ENCODE measurements at regions of chr16 and their contacts with region 1.

Region 1: DNA sequence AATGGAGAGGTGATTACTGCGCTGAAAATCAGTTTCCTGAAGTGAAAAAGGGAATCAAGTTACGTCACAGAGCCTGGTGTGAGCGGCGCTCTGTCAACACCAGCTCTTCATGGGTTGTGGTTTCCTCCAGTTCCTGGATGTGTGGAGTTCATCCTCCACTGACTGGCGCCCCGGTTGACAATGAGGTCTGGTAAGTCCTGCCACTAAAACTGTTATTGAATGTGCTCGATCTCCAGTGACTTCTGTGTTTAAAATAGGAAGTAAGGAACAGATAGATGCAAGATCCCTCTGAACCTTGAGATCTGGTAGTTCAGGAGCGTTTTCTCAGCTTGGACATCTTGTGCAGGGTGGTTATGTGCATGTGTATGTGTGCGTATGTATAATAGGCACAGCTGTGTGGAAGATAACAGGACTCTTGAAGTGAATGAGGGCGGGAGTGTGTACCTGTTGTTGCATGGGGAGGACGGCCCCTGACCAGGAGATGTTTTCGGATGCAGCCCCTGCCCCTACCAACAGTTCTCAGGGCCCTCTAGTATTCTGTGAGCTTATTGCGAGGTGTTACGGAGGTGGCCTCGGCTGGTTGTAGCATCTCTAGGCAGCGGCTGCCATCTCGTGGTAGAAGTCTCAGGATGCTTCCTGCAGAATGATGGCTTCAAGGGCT is 22.0 kb upstream of the GOT2 start:
- DNase-seq: peak; percentile 44 to 82 (median 76)
- ATAC-seq: peak; percentile 94
- H3K4me3 ChIP-seq: peak overlapping the region; percentile 28
- H3K4me3 Mint-ChIP-seq: peak overlapping the region; percentile 56 to 79 (median 70)
- H3K27ac ChIP-seq: peak overlapping the region; percentile 19
- H3K27ac Mint-ChIP-seq: peak overlapping the region; percentile 32 to 94 (median 87)
- H3K4me1 ChIP-seq: peaks cover 0 to 7% of the 10 kb centered on the region in 2 donors
- H3K4me1 Mint-ChIP-seq: peaks cover 7 to 10% (median 9%) of the 10 kb centered on the region in 7 donors
- H3K27me3 ChIP-seq: no peaks in the 10 kb centered on the region
- H3K27me3 Mint-ChIP-seq: peaks cover 0 to 8% (median 0%) of the 10 kb centered on the region in 5 donors

Region 2: GRCh38 chr16:57576429-57576870 is 1179.7 kb before region 1 on chr16:
- CTCF ChIA-PET with region 1: no interaction called
- POLR2A ChIA-PET with region 1: no interaction called
- intact Hi-C with region 1: loop called in 1 of 2 experiments (anchors 5 kb)
- DNase-seq: peak; percentile 55 to 83 (median 72)
- ATAC-seq: peak; percentile 87
- H3K4me3 ChIP-seq: no peak overlapping the region
- H3K4me3 Mint-ChIP-seq: no peak overlapping the region
- H3K27ac ChIP-seq: no peak overlapping the region
- H3K27ac Mint-ChIP-seq: peak overlapping the region in 1 of 9 donors; percentile 96
- H3K4me1 ChIP-seq: peaks cover 0 to 44% of the 10 kb centered on the region in 2 donors
- H3K4me1 Mint-ChIP-seq: peaks cover 0 to 45% (median 6%) of the 10 kb centered on the region in 7 donors
- H3K27me3 ChIP-seq: no peaks in the 10 kb centered on the region
- H3K27me3 Mint-ChIP-seq: peaks cover 0 to 6% (median 4%) of the 10 kb centered on the region in 5 donors

Region 3: DNA sequence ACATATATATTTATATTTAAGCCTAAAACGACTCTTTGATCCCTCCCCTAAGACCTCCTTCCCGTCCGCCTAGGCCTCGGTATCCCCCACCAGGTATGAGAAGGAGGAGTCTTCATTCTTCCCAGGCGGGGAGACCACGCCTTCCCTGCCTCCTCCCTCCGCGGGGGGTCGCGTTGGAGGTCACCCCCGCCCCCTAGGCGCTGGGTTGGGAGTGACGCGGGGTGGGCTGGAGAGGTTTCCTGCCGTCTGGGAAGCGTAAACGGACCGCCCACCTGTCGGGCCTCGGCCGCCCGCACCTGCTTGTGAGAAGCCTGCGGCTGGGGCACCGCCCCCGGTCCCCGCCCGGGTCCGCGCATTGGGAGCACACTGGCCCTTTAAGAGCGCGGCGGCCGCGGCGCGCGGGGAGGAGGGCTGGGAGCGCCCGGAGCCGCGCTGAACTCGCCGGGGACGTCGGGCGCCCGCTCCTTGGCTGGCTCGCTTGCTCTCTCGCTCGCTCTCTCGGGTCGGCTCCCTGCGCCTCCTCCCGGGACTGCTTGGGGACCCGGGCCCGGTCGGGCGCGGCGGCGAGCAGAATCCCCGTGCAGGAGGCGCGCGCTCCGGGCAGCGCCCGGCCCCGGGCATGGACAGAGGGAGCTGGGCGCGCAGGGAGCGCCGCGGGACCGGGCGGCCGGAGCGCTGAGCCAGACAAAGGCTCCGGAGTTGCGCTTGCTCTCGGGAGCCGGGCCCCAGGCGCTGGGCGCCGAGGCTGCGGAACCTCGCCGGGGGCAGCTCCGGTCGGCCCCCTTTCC is 730.6 kb before region 1 on chr16 and contains the start of gene MMP15:
- CTCF ChIA-PET with region 1: no interaction called
- POLR2A ChIA-PET with region 1: no interaction called
- intact Hi-C with region 1: loop called in 1 of 2 experiments (anchors 1 kb)
- DNase-seq: peak; percentile 27 to 74 (median 43)
- ATAC-seq: peak; percentile 76
- H3K4me3 ChIP-seq: peak within 1 kb of the TSS; percentile 78
- H3K4me3 Mint-ChIP-seq: peak within 1 kb of the TSS; percentile 90 to 95 (median 93)
- H3K27ac ChIP-seq: no peak within 1 kb of the TSS
- H3K27ac Mint-ChIP-seq: peak within 1 kb of the TSS; percentile 73 to 90 (median 84)
- H3K4me1 ChIP-seq: peaks cover 8 to 9% of the 10 kb centered on the region in 2 donors
- H3K4me1 Mint-ChIP-seq: peaks cover 6 to 18% (median 12%) of the 10 kb centered on the region in 7 donors
- H3K27me3 ChIP-seq: no peaks in the 10 kb centered on the region
- H3K27me3 Mint-ChIP-seq: peaks cover 0 to 39% (median 3%) of the 10 kb centered on the region in 5 donors
- total RNA-seq, gene MMP15: 0.20 to 0.85 (median 0.69) TPM

Region 4: DNA sequence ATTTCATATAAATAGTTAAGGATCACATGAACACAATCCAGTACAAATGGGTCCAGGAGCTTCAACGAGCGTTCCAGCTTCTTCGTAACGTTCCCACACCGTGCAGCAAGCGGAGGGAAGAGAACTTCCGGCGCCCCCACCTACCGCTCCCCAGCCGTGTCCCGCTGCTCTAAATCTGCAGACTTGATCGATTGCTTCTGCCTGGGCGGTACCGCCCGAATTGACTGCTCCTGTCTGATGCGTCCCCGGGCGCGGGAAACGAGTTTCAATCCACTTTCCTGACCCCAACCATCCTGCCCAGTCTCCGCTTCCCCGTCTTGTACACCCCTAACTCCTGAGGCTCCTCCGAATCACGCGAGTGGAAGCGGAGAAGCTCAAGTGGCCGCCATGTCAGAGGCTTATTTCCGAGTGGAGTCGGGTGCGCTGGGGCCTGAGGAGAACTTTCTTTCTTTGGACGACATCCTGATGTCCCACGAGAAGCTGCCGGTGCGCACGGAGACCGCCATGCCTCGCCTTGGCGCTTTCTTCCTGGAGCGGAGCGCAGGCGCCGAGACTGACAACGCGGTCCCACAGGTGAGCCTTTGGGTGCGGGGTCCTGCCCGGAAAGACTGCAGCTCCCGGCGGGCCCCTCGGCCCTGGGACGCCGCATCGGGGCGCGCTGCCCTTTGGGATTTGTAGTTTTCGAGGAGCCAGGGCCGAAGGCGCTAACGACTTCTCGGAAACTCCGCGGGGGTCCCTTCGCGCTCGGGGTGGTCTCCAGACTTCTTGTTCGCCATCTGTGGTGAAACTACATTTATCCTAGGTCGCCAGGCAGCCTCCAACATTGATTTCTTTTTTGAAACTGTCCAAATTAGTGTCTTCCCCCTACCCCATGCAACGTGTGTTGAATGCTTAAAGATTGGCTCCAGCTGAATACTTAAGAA is 363.6 kb before region 1 on chr16 and contains the start of gene GINS3:
- CTCF ChIA-PET with region 1: interaction called, 3 read pairs
- POLR2A ChIA-PET with region 1: no interaction called
- intact Hi-C with region 1: loop called in 1 of 2 experiments (anchors 2 kb)
- DNase-seq: peak; percentile 67 to 83 (median 81)
- ATAC-seq: peak; percentile 96
- H3K4me3 ChIP-seq: peak within 1 kb of the TSS; percentile 99
- H3K4me3 Mint-ChIP-seq: peak within 1 kb of the TSS; percentile 91 to 100 (median 98)
- H3K27ac ChIP-seq: peak within 1 kb of the TSS; percentile 80
- H3K27ac Mint-ChIP-seq: peak within 1 kb of the TSS; percentile 89 to 99 (median 95)
- H3K4me1 ChIP-seq: peaks cover 5 to 6% of the 10 kb centered on the region in 2 donors
- H3K4me1 Mint-ChIP-seq: peaks cover 3 to 28% (median 16%) of the 10 kb centered on the region in 7 donors
- H3K27me3 ChIP-seq: no peaks in the 10 kb centered on the region
- H3K27me3 Mint-ChIP-seq: peaks cover 0 to 21% (median 0%) of the 10 kb centered on the region in 5 donors
- total RNA-seq, gene GINS3: 0.66 to 13.3 (median 1.4) TPM

Region 5: DNA sequence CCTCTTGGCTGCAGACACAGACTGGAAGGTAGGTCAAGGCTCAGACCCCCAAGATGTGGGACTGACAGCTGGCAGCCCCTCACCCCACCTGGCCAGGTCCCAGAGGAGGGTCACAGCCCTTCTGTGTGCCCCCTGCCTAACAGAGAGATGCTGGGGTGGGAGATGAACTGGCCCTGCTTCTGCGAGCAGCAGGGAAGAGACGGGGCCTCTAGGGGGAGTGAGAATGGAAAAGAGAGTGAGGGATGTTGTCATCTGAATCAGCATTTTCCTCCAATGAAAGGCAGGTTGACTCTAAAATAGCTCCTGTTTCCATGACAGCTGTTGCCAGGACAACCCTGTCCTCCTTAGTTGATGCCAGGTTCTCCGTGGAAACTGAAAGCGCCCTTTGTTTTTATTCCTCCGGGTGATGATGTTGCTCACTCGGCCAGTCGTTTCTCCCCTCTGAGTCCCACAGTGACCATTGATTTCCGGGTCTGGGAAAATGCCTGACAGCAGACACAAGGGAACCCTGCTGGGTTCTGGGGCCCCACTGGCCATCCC is 261.1 kb before region 1 on chr16:
- CTCF ChIA-PET with region 1: no interaction called
- POLR2A ChIA-PET with region 1: no interaction called
- intact Hi-C with region 1: loop called in 1 of 2 experiments (anchors 1 kb)
- DNase-seq: peak in 8 of 9 donors; percentile 23 to 83 (median 56)
- ATAC-seq: peak; percentile 63
- H3K4me3 ChIP-seq: no peak overlapping the region
- H3K4me3 Mint-ChIP-seq: peak overlapping the region in 1 of 10 donors; percentile 11
- H3K27ac ChIP-seq: no peak overlapping the region
- H3K27ac Mint-ChIP-seq: peak overlapping the region in 5 of 9 donors; percentile 36 to 75 (median 59)
- H3K4me1 ChIP-seq: peaks cover 0 to 3% of the 10 kb centered on the region in 2 donors
- H3K4me1 Mint-ChIP-seq: peaks cover 0 to 14% (median 3%) of the 10 kb centered on the region in 7 donors
- H3K27me3 ChIP-seq: no peaks in the 10 kb centered on the region
- H3K27me3 Mint-ChIP-seq: peaks cover 0 to 14% (median 0%) of the 10 kb centered on the region in 5 donors

Region 6: DNA sequence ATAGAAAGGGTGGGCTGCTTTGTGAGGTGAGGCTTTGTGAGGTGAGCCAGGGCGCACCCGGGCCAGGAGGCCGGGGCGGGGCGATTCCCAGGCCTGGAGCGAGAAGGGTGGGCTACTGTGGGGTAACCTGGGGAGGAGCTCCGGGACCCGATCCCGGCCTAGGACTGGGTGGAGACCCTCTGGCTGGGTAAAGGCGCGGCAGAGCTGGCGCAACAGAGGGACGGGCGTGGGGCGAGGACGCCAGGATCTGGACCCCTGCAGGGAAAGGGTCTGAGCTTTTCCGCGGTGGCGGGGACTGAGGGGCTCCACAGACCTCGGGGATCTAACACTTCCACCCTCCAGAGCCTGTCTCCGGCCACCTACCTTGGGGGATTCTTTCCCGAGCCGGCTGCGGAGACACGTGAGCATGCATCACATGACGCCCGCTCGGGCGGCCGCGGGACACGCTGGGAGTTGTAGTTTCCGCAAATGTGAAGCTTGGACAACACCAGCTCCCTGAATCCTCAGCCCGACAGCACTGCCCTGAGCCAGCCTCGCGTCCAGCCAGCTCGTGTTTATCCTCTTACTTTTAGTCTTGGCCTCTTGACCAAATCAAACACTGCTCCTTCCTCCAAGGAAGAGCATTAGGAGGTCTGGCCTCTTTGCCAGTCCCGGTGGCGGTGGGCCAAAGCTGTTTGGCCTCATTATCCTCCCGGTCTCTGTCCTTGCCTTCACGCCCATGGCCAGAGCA is 71.6 kb before region 1 on chr16 and contains the start of gene SLC38A7:
- CTCF ChIA-PET with region 1: interaction called, 3 read pairs
- POLR2A ChIA-PET with region 1: no interaction called
- intact Hi-C with region 1: loop called (anchors 2 to 5 kb)
- DNase-seq: peak; percentile 49 to 73 (median 60)
- ATAC-seq: peak; percentile 88
- H3K4me3 ChIP-seq: peak within 1 kb of the TSS; percentile 78
- H3K4me3 Mint-ChIP-seq: peak within 1 kb of the TSS; percentile 86 to 95 (median 91)
- H3K27ac ChIP-seq: peak within 1 kb of the TSS; percentile 71
- H3K27ac Mint-ChIP-seq: peak within 1 kb of the TSS; percentile 52 to 91 (median 86)
- H3K4me1 ChIP-seq: peaks cover 12 to 20% of the 10 kb centered on the region in 2 donors
- H3K4me1 Mint-ChIP-seq: peaks cover 6 to 27% (median 22%) of the 10 kb centered on the region in 7 donors
- H3K27me3 ChIP-seq: no peaks in the 10 kb centered on the region
- H3K27me3 Mint-ChIP-seq: peaks cover 0 to 4% (median 0%) of the 10 kb centered on the region in 5 donors
- total RNA-seq, gene SLC38A7: 10.2 to 16.8 (median 16.7) TPM

Measured in naive thymus-derived CD4-positive, alpha-beta T cell (primary cell).